ENCODE measurements at regions of chr3 and their contacts with region 1.

Region 1: DNA sequence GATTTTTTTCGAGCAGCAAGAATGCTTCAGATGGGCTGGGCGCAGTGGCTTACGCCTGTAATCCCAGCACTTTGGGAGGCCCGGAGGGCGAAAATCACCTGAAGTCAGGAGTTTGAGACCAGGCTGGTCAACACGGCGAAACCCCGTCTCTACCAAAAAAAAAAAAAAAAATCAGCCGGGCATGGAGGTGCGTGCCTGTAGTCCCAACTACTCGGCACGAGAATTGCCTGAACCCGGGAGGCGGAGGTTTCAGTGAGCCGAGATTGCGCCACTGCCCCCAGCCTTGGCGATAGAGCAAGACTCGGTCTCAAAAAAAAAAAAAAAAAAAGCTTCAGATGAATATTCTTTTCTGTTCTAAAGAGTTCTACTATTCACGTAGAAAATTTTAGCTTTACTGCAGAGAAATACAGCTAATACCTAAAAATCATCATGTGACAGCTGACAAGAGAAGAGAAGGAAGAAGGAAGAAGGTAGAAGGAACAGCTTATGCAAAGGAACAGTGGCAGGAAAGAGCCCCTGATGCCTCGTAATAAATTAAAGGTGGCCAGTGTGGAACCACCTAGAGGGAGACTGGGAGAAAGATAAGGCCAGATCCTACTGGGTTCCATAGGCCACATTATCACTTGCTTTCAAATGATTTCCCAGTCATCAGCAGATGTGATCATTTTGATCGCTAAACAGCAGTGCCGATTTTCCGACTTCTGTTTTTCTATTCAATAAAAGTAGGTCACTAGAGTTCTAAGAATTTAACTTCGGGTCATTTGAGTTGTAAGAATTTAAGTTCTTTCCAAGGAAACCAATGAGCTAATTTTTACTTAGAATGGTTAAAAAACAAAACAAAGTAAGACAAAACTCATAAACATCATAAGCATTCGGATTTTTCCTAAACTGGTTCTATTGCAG is 1.5 kb downstream of the CMTM6 start:
- DNase-seq: no peak
- ATAC-seq: no peak
- H3K4me3 ChIP-seq: peak overlapping the region in 1 of 2 donors; percentile 99
- H3K4me3 Mint-ChIP-seq: peak overlapping the region; percentile 96 to 99 (median 99)
- H3K27ac ChIP-seq: peak overlapping the region; percentile 95
- H3K27ac Mint-ChIP-seq: peak overlapping the region; percentile 93 to 96
- H3K4me1 ChIP-seq: peaks cover 11 to 13% of the 10 kb centered on the region in 2 experiments
- H3K4me1 Mint-ChIP-seq: peaks cover 49 to 57% (median 56%) of the 10 kb centered on the region in 3 donors
- H3K27me3 ChIP-seq: no peaks in the 10 kb centered on the region
- H3K27me3 Mint-ChIP-seq: no peaks in the 10 kb centered on the region

Region 2: GRCh38 chr3:32835961-32836360 is 334.8 kb after region 1 on chr3:
- CTCF ChIA-PET with region 1: no interaction called
- POLR2A ChIA-PET with region 1: no interaction called
- DNase-seq: no peak
- ATAC-seq: no peak
- H3K4me3 ChIP-seq: no peak overlapping the region
- H3K4me3 Mint-ChIP-seq: no peak overlapping the region
- H3K27ac ChIP-seq: no peak overlapping the region
- H3K27ac Mint-ChIP-seq: no peak overlapping the region
- H3K4me1 ChIP-seq: no peaks in the 10 kb centered on the region
- H3K4me1 Mint-ChIP-seq: no peaks in the 10 kb centered on the region
- H3K27me3 ChIP-seq: peaks cover 0 to 15% of the 10 kb centered on the region in 2 experiments
- H3K27me3 Mint-ChIP-seq: peaks cover 18 to 30% of the 10 kb centered on the region in 2 donors

Region 3: GRCh38 chr3:33089515-33089914 is 588.4 kb after region 1 on chr3:
- CTCF ChIA-PET with region 1: no interaction called
- POLR2A ChIA-PET with region 1: interaction called, 6 to 16 read pairs
- DNase-seq: peak in 1 of 35 experiments; percentile 40
- ATAC-seq: peak in 3 of 4 experiments; percentile 43 to 62 (median 54)
- H3K4me3 ChIP-seq: no peak overlapping the region
- H3K4me3 Mint-ChIP-seq: peak overlapping the region; percentile 11 to 47 (median 41)
- H3K27ac ChIP-seq: peak overlapping the region; percentile 28
- H3K27ac Mint-ChIP-seq: peak overlapping the region; percentile 56 to 79
- H3K4me1 ChIP-seq: peaks cover 6 to 9% of the 10 kb centered on the region in 2 experiments
- H3K4me1 Mint-ChIP-seq: peaks cover 69 to 89% (median 84%) of the 10 kb centered on the region in 3 donors
- H3K27me3 ChIP-seq: no peaks in the 10 kb centered on the region
- H3K27me3 Mint-ChIP-seq: no peaks in the 10 kb centered on the region

Measured in T-cell (primary cell).